ENCODE measurements at regions of chr1 and their contacts with region 1.

Region 1: GRCh38 chr1:190444464-190444863 is 33.2 kb downstream of the BRINP3 start:
- DNase-seq: no peak
- H3K4me3 ChIP-seq: no peak overlapping the region
- H3K27ac ChIP-seq: no peak overlapping the region
- H3K4me1 ChIP-seq: no peaks in the 10 kb centered on the region
- H3K27me3 ChIP-seq: no peaks in the 10 kb centered on the region
- CTCF ChIP-seq: no peak

Region 2: DNA sequence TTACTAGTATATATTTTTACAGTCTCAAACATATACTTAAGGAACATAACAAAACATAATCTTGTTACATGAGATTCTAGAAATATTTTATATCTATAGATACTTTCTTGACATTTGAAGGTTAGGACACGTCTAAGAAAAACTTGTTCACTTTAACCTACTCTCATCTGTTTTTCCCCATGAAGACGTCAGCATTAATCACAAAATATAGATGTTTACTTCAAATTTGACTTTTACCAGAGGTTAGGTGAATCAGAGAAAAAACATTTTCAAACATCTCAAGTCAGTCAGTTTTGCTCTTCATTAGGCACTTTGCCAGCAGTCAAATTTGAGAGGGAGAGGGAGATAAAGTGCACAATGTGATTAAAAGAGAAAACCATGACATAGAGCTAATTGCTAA is 14.5 kb before region 1 on chr1:
- CTCF ChIA-PET with region 1: no interaction called
- POLR2A ChIA-PET with region 1: no interaction called
- intact Hi-C with region 1: no loop called
- DNase-seq: no peak
- H3K4me3 ChIP-seq: no peak overlapping the region
- H3K27ac ChIP-seq: no peak overlapping the region
- H3K4me1 ChIP-seq: peaks cover 16% of the 10 kb centered on the region
- H3K27me3 ChIP-seq: no peaks in the 10 kb centered on the region
- CTCF ChIP-seq: no peak

Region 3: DNA sequence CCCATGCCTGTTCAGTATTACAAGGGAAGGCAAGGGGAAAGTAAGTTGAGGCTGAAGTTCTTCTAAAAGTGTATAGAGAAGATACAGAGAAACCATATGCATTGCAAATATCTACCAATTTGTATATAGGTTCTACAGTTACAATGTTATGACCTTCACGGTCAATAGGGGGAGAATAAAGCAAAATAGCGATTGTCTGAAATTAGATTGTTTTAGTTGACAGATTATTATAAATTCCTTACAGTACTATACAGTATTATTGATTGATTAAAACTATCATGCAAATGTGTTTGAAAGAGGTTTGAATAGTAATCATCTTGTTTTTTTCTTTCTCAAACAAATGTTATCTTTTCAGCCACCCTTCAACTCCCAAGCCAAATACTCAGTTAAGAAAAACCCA is 46.9 kb after region 1 on chr1:
- CTCF ChIA-PET with region 1: no interaction called
- POLR2A ChIA-PET with region 1: interaction called, 13 read pairs
- intact Hi-C with region 1: no loop called
- DNase-seq: no peak
- H3K4me3 ChIP-seq: no peak overlapping the region
- H3K27ac ChIP-seq: no peak overlapping the region
- H3K4me1 ChIP-seq: no peaks in the 10 kb centered on the region
- H3K27me3 ChIP-seq: no peaks in the 10 kb centered on the region
- CTCF ChIP-seq: no peak

Measured in A673 (cell line).